ENCODE measurements at regions of chr5 and their contacts with region 1.

Region 1: DNA sequence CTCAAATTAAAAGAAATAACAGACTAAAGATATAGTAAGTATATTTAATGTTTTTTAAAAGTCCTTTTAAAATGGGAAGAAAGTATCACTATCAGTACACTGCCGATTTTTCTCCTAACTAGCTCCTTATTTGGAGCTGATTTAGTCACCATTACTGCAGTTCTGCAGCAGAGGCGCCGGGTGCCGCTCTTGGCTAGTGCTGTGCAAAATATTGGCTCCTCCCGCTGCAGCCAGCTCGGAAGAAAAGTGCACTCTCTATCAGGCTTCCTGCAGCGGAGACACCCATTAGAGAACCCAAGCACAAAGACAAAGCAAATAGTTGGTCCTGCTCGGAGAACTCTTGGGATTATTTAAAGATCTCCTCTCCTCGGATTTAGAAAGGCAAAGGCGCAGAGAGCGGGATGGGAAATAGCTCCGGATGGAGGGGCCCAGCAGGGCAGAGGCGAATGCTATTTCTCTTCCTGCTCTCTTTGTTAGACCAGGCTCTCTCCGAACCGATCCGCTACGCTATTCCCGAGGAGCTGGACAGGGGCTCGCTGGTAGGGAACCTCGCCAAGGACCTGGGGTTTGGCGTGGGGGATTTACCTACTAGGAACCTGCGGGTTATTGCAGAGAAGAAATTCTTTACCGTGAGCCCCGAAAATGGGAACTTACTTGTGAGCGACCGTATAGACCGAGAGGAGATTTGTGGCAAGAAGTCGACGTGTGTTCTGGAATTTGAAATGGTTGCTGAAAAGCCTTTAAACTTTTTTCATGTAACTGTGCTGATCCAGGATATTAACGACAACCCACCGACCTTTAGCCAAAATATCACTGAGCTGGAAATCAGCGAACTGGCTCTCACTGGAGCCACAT is at the start of gene PCDHGB3:
- DNase-seq: peak; percentile 40
- H3K4me3 ChIP-seq: peak within 1 kb of the TSS in 1 of 3 experiments; percentile 23
- H3K27ac ChIP-seq: no peak within 1 kb of the TSS
- H3K4me1 ChIP-seq: no peaks in the 10 kb centered on the region
- H3K27me3 ChIP-seq: peaks cover 40 to 91% of the 10 kb centered on the region in 2 experiments
- CTCF ChIP-seq: peak in 1 of 2 donors; percentile 24
- POLR2A ChIP-seq: no peak
- total RNA-seq, gene PCDHGB3: 1.7 and 2.0 TPM in 2 replicates

Region 2: GRCh38 chr5:141223112-141223783 is 147.0 kb before region 1 on chr5 and contains the start of gene PCDHB14:
- CTCF ChIA-PET with region 1: interaction called, 14 read pairs
- POLR2A ChIA-PET with region 1: no interaction called
- dilution Hi-C with region 1: no loop called
- intact Hi-C with region 1: no loop called
- DNase-seq: peak; percentile 31
- H3K4me3 ChIP-seq: peak within 1 kb of the TSS in 1 of 3 experiments; percentile 32
- H3K27ac ChIP-seq: no peak within 1 kb of the TSS
- H3K4me1 ChIP-seq: no peaks in the 10 kb centered on the region
- H3K27me3 ChIP-seq: no peaks in the 10 kb centered on the region
- CTCF ChIP-seq: no peak
- POLR2A ChIP-seq: no peak
- total RNA-seq, gene PCDHB14: 0.55 and 1.0 TPM in 2 replicates

Region 3: GRCh38 chr5:141326088-141326854 is 44.0 kb before region 1 on chr5:
- CTCF ChIA-PET with region 1: interaction called, 15 read pairs
- POLR2A ChIA-PET with region 1: no interaction called
- dilution Hi-C with region 1: no loop called
- intact Hi-C with region 1: no loop called
- DNase-seq: peak; percentile 77
- H3K4me3 ChIP-seq: peak overlapping the region; percentile 27 to 74 (median 50)
- H3K27ac ChIP-seq: no peak overlapping the region
- H3K4me1 ChIP-seq: no peaks in the 10 kb centered on the region
- H3K27me3 ChIP-seq: peaks cover 14 to 31% of the 10 kb centered on the region in 2 experiments
- CTCF ChIP-seq: peak; percentile 65 to 70
- POLR2A ChIP-seq: no peak

Region 4: GRCh38 chr5:141387233-141387949 is 17.2 kb after region 1 on chr5 and contains the start of gene PCDHGB4:
- CTCF ChIA-PET with region 1: interaction called, 10 read pairs
- POLR2A ChIA-PET with region 1: no interaction called
- dilution Hi-C with region 1: no loop called
- intact Hi-C with region 1: no loop called
- DNase-seq: peak; percentile 30
- H3K4me3 ChIP-seq: peak within 1 kb of the TSS in 2 of 3 experiments; percentile 9 to 22
- H3K27ac ChIP-seq: no peak within 1 kb of the TSS
- H3K4me1 ChIP-seq: no peaks in the 10 kb centered on the region
- H3K27me3 ChIP-seq: peaks cover 35 to 78% of the 10 kb centered on the region in 2 experiments
- CTCF ChIP-seq: peak; percentile 46 to 51
- POLR2A ChIP-seq: no peak
- total RNA-seq, gene PCDHGB4: 4.4 and 6.5 TPM in 2 replicates

Measured in endothelial cell of umbilical vein (primary cell).